Testis (tissue), 5 donors: ENCODE measurements at regions of chr10 and their contacts with region 1.

Region 1: GRCh38 chr10:91251430-91252056 is 31.1 kb downstream of the PCGF5 start:
- DNase-seq: peak; percentile 71
- H3K4me3 ChIP-seq: no peak overlapping the region
- H3K27ac ChIP-seq: no peak overlapping the region
- H3K4me1 ChIP-seq: no peaks in the 10 kb centered on the region
- H3K27me3 ChIP-seq: no peaks in the 10 kb centered on the region
- CTCF ChIP-seq: peak; percentile 81 to 89 (median 83)
- POLR2A ChIP-seq: no peak

Region 2: DNA sequence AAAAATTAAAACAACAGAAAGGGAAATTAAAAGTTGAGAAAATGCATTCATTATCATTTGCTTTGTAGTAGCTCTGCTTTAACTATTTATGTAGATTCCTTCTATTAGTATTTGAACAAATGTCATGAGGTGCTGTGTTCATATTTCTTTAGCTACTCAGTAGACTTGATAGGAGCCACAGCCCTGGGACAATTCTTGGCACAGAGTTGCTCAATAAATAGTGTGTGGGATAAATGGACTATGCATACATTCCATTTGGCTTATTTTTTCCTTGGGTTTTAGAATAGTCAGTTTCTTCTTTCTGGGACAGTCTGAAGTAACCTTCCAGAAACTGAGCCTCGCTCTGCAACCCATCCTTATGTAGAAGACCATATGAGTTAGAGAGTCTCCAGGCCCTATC is 366.4 kb before region 1 on chr10:
- intact Hi-C with region 1: no loop called
- DNase-seq: no peak
- H3K4me3 ChIP-seq: no peak overlapping the region
- H3K27ac ChIP-seq: no peak overlapping the region
- H3K4me1 ChIP-seq: no peaks in the 10 kb centered on the region
- H3K27me3 ChIP-seq: no peaks in the 10 kb centered on the region
- CTCF ChIP-seq: no peak
- POLR2A ChIP-seq: no peak

Region 3: GRCh38 chr10:90905925-90906324 is 345.6 kb before region 1 on chr10:
- intact Hi-C with region 1: loop called (anchors 10 kb)
- DNase-seq: no peak
- H3K4me3 ChIP-seq: no peak overlapping the region
- H3K27ac ChIP-seq: no peak overlapping the region
- H3K4me1 ChIP-seq: no peaks in the 10 kb centered on the region
- H3K27me3 ChIP-seq: no peaks in the 10 kb centered on the region
- CTCF ChIP-seq: no peak
- POLR2A ChIP-seq: no peak

Region 4: GRCh38 chr10:91006001-91006751 is 245.4 kb before region 1 on chr10:
- intact Hi-C with region 1: loop called (anchors 10 kb)
- DNase-seq: peak; percentile 71
- H3K4me3 ChIP-seq: no peak overlapping the region
- H3K27ac ChIP-seq: peak overlapping the region in 1 of 2 donors; percentile 21
- H3K4me1 ChIP-seq: no peaks in the 10 kb centered on the region
- H3K27me3 ChIP-seq: no peaks in the 10 kb centered on the region
- CTCF ChIP-seq: peak; percentile 92 to 98 (median 97)
- POLR2A ChIP-seq: no peak

Region 5: GRCh38 chr10:91043173-91043910 is 208.2 kb before region 1 on chr10:
- intact Hi-C with region 1: no loop called
- DNase-seq: peak; percentile 15
- H3K4me3 ChIP-seq: no peak overlapping the region
- H3K27ac ChIP-seq: no peak overlapping the region
- H3K4me1 ChIP-seq: no peaks in the 10 kb centered on the region
- H3K27me3 ChIP-seq: no peaks in the 10 kb centered on the region
- CTCF ChIP-seq: peak in 2 of 3 experiments; percentile 25 to 43
- POLR2A ChIP-seq: no peak

Region 6: DNA sequence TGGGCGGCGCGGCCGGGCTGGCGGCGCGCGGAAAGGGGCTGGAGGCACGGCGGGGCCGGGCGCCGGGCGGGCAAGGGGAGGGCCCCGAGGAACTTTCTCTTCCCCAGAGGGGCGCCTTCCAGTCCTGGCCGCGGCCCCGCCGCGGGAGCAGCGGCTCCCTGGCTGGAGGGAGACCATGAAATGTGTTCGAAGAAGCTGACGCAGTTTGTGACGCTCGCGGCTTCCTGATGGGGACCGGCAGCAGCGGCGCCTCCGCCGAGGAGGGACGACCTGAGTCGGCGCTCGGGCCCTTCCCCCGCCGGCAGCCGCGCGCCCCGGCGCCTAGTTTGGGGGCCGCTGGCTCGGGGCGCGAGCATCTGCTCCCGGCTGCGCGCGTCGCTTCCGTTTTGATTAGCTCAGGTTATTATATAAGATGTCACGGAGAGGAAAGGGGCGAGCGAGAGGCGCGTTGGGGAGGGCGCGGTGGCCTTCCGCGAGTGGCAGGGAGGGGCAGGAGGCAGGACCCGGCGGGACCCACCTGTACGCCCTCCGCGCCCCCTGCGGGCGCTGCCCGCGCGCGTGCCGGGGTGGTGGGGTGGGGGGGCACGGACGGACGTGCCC is 88.2 kb before region 1 on chr10:
- intact Hi-C with region 1: no loop called
- DNase-seq: peak; percentile 59
- H3K4me3 ChIP-seq: peak overlapping the region; percentile 81 to 93
- H3K27ac ChIP-seq: peak overlapping the region; percentile 91
- H3K4me1 ChIP-seq: peaks cover 4% of the 10 kb centered on the region
- H3K27me3 ChIP-seq: no peaks in the 10 kb centered on the region
- CTCF ChIP-seq: no peak
- POLR2A ChIP-seq: no peak